ENCODE measurements at regions of chr10 and their contacts with region 1.

Region 1: GRCh38 chr10:69506834-69507721 is 55.8 kb downstream of the TSPAN15 start:
- DNase-seq: no peak
- H3K4me3 Mint-ChIP-seq: peak overlapping the region; percentile 57
- H3K27ac Mint-ChIP-seq: no peak overlapping the region
- H3K4me1 Mint-ChIP-seq: peaks cover 9% of the 10 kb centered on the region
- H3K27me3 Mint-ChIP-seq: peaks cover 23% of the 10 kb centered on the region

Region 2: GRCh38 chr10:69425511-69426298 is 81.4 kb before region 1 on chr10:
- intact Hi-C with region 1: loop called (anchors 2 kb)
- DNase-seq: no peak
- H3K4me3 Mint-ChIP-seq: no peak overlapping the region
- H3K27ac Mint-ChIP-seq: no peak overlapping the region
- H3K4me1 Mint-ChIP-seq: peaks cover 17% of the 10 kb centered on the region
- H3K27me3 Mint-ChIP-seq: no peaks in the 10 kb centered on the region

Region 3: DNA sequence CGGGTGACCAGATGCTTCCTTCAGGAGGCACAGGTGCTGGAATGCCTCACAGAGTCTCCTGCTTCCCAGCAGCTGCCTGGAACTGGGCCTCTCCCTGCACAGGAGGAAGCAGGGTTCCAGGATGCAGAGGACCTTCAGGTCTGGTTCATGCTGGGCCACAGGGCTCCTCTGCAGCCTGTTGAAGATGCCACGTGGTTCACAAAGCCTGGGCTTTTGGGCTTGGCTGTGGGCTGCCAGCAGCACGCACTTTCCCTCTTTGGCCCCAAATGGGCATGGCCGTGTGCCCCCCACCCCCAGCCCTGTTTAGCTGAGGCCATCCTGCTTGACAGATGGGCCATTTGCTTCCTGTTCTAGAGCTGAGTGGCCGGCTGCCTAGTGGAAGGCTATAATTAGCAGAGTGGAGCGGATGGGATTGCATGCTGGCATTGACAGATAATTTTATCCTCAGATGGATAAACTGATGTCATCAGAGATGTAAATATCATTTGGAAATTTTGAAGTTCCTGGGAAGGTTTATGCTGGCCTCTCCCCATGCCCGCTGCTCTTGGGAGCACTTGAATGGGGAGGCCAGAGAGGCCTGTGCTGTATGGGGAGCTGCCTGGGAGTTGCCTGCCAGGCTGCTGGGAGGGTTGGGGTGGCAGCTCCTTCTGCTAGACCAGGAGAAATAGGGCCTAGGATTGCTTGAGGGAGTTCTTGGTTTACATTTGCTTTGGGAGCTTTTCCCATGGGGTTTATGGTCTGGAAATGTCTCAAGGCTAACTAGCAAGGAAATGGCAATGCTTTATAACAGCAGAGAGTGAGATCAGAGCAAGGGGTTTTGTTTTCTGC is 27.6 kb before region 1 on chr10:
- intact Hi-C with region 1: no loop called
- DNase-seq: no peak
- H3K4me3 Mint-ChIP-seq: no peak overlapping the region
- H3K27ac Mint-ChIP-seq: no peak overlapping the region
- H3K4me1 Mint-ChIP-seq: no peaks in the 10 kb centered on the region
- H3K27me3 Mint-ChIP-seq: peaks cover 3% of the 10 kb centered on the region

Region 4: GRCh38 chr10:69527961-69528360 is 20.9 kb after region 1 on chr10:
- intact Hi-C with region 1: no loop called
- DNase-seq: no peak
- H3K4me3 Mint-ChIP-seq: no peak overlapping the region
- H3K27ac Mint-ChIP-seq: no peak overlapping the region
- H3K4me1 Mint-ChIP-seq: no peaks in the 10 kb centered on the region
- H3K27me3 Mint-ChIP-seq: peaks cover 19% of the 10 kb centered on the region